SK-N-SH (cell line): ENCODE measurements at regions of chr7 and their contacts with region 1.

Region 1: DNA sequence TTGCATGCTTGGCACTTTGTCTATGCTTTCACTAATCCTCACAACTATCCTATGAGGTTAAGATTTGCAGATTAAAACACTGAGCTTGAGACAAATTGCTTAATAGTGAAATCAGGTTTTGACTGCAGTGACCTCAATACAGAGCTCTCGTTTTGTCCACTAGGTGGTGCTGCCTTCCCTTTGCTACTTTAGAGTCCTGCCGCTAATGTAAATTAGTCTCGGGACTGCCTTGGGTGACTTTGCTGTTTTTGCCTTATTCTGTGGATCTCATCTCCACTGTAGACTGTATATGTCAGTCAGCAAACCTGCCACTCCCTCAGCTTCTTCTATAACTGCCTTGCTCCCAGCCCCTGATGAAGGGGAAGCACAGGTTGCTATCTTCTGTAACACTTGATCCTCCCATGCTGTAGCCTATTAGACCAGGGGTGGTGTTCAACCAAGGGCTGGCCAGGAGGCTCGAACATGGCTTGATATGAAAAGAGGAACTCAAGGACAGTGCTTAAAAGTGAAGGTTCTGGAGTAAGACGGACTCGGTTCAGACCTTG is 26.0 kb downstream of the ASB4 start:
- DNase-seq: peak; percentile 48
- H3K4me3 ChIP-seq: no peak overlapping the region; a peak in 1 of 4 replicates
- H3K27ac ChIP-seq: no peak overlapping the region
- H3K4me1 ChIP-seq: peaks cover 0 to 4% of the 10 kb centered on the region in 2 experiments; a peak in 2 of 4 replicates
- H3K27me3 ChIP-seq: peaks cover 9% of the 10 kb centered on the region; the same call in 1 of the 2 replicates
- CTCF ChIP-seq: peak; percentile 99
- EP300 ChIP-seq: no peak
- RAD21 ChIP-seq: peak; percentile 74

Region 2: DNA sequence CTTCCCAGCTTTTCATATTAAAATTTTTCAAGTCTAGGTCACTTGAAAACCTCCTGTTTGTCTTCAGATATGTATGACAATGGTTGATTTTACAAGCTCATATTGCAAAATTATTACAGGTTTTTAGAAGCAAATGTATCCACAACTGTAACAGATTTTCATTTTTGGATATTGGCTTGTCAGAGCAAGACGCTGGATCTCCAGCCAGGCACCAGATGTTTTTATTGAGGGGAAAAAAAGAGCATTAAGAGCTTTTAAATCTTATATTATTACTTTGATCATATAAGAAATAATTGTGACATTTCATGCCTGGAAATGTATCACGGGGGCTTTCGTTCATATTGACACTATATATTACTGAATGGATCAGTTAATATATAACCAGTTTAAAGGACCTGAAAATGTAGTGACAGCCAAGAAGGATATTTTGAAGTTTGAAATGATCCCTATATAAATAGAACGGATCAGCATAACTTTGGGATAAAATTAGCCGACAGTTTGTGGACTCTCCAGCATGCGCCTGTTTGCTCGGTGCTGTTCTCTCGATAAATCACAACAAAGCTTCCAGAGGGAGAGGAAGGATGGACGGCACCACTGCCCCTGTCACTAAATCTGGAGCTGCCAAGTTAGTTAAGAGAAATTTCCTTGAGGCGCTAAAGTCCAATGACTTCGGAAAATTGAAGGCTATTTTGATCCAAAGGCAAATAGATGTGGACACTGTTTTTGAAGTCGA is 26.2 kb before region 1 on chr7 and contains the start of gene ASB4:
- CTCF ChIA-PET with region 1: interaction called, 39 read pairs
- POLR2A ChIA-PET with region 1: no interaction called
- DNase-seq: no peak
- H3K4me3 ChIP-seq: no peak within 1 kb of the TSS
- H3K27ac ChIP-seq: no peak within 1 kb of the TSS
- H3K4me1 ChIP-seq: no peaks in the 10 kb centered on the region
- H3K27me3 ChIP-seq: no peaks in the 10 kb centered on the region
- CTCF ChIP-seq: no peak
- EP300 ChIP-seq: no peak
- RAD21 ChIP-seq: no peak
- polyA plus RNA-seq, gene ASB4: not detected in 2 replicates

Region 3: GRCh38 chr7:95501261-95501832 is 10.4 kb before region 1 on chr7:
- CTCF ChIA-PET with region 1: interaction called, 22 read pairs
- POLR2A ChIA-PET with region 1: interaction called, 5 read pairs
- DNase-seq: no peak
- H3K4me3 ChIP-seq: no peak overlapping the region
- H3K27ac ChIP-seq: peak overlapping the region in 1 of 2 experiments; percentile 77; a peak in 2 of 4 replicates
- H3K4me1 ChIP-seq: peaks cover 0 to 9% of the 10 kb centered on the region in 2 experiments; a peak in 1 of 4 replicates
- H3K27me3 ChIP-seq: no peaks in the 10 kb centered on the region
- CTCF ChIP-seq: no peak
- EP300 ChIP-seq: peak in 1 of 2 experiments; percentile 65; a peak in 1 of 4 replicates
- RAD21 ChIP-seq: no peak

Region 4: GRCh38 chr7:95558864-95559263 is 47.1 kb after region 1 on chr7:
- CTCF ChIA-PET with region 1: interaction called, 10 read pairs
- POLR2A ChIA-PET with region 1: no interaction called
- DNase-seq: no peak
- H3K4me3 ChIP-seq: no peak overlapping the region
- H3K27ac ChIP-seq: no peak overlapping the region
- H3K4me1 ChIP-seq: no peaks in the 10 kb centered on the region
- H3K27me3 ChIP-seq: peaks cover 34% of the 10 kb centered on the region
- CTCF ChIP-seq: no peak
- EP300 ChIP-seq: no peak
- RAD21 ChIP-seq: no peak

Region 5: GRCh38 chr7:95675016-95675415 is 163.2 kb after region 1 on chr7:
- CTCF ChIA-PET with region 1: interaction called, 39 read pairs
- POLR2A ChIA-PET with region 1: no interaction called
- DNase-seq: no peak
- H3K4me3 ChIP-seq: no peak overlapping the region
- H3K27ac ChIP-seq: no peak overlapping the region
- H3K4me1 ChIP-seq: no peaks in the 10 kb centered on the region
- H3K27me3 ChIP-seq: peaks cover 23% of the 10 kb centered on the region; the same call in 1 of the 2 replicates
- CTCF ChIP-seq: no peak
- EP300 ChIP-seq: no peak
- RAD21 ChIP-seq: no peak

Region 6: GRCh38 chr7:95690367-95690947 is 178.7 kb after region 1 on chr7:
- CTCF ChIA-PET with region 1: interaction called, 292 read pairs
- POLR2A ChIA-PET with region 1: no interaction called
- DNase-seq: peak; percentile 27
- H3K4me3 ChIP-seq: peak overlapping the region in 1 of 2 experiments; percentile 23; a peak in 1 of 4 replicates
- H3K27ac ChIP-seq: no peak overlapping the region
- H3K4me1 ChIP-seq: peaks cover 0 to 6% of the 10 kb centered on the region in 2 experiments; a peak in 2 of 4 replicates
- H3K27me3 ChIP-seq: 0 out of 2 replicates have a peak, but pooled peaks cover 7% of the 10 kb centered on the region
- CTCF ChIP-seq: peak; percentile 96
- EP300 ChIP-seq: no peak
- RAD21 ChIP-seq: no peak; the same call in none of the 2 replicates